Endothelial cell of umbilical vein (primary cell): ENCODE measurements at regions of chr5 and their contacts with region 1.

Region 1: DNA sequence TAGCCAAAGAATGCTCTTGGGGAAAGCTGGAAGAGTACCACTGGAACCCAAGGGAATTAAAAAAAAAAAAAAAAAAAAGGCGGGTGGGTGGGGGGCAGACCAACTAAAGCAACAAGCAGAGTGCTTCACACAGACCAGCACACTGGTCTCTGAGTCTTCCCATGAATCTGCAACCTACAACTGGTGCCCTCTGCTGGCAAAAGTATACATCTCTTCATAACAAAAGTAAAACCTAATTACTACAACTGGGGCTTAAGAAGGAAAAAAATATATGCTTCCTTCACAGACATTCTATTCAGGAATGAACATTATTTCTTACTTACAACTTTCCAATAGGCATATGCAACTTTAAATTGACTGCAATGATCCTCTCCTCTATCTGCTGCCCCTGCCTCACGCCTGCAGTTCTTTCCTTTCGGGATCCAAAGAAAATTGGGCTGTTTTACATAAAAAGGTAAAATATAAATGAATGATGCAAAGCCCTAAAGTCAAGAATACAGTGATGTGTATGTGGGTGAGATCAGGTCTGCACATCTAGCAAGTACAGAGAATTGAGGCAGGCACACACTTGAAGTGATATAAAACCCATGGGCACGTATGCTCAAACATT is 7.2 kb upstream of the KLHL3 start:
- DNase-seq: peak; percentile 72
- H3K4me3 ChIP-seq: no peak overlapping the region
- H3K27ac ChIP-seq: no peak overlapping the region
- H3K4me1 ChIP-seq: no peaks in the 10 kb centered on the region
- H3K27me3 ChIP-seq: no peaks in the 10 kb centered on the region
- CTCF ChIP-seq: peak; percentile 65 to 67
- POLR2A ChIP-seq: no peak

Region 2: GRCh38 chr5:137254119-137255090 is 488.7 kb before region 1 on chr5:
- CTCF ChIA-PET with region 1: no interaction called
- POLR2A ChIA-PET with region 1: no interaction called
- dilution Hi-C with region 1: no loop called
- intact Hi-C with region 1: no loop called
- DNase-seq: no peak
- H3K4me3 ChIP-seq: no peak overlapping the region
- H3K27ac ChIP-seq: no peak overlapping the region
- H3K4me1 ChIP-seq: no peaks in the 10 kb centered on the region
- H3K27me3 ChIP-seq: no peaks in the 10 kb centered on the region
- CTCF ChIP-seq: no peak
- POLR2A ChIP-seq: no peak

Region 3: DNA sequence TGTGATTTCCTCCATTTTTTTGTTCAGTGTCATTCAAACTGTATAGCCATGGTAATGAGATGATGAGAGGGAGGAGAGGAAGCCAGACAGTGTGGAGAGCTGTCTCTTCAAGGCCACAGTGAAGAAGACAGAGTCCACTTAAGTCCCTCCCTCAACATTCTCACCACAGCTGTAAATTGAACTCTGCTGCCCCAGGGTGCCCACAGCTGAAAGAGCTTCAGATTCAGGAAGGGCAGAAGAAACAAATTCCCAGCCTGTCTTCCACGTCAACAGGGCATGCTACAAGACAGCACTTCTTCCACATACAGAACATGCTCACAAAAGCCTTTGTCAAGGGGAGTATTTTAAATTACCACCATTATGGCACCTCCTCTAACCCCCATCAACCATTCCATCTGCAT is 107.6 kb before region 1 on chr5:
- CTCF ChIA-PET with region 1: interaction called, 375 read pairs
- POLR2A ChIA-PET with region 1: no interaction called
- dilution Hi-C with region 1: no loop called
- intact Hi-C with region 1: no loop called
- DNase-seq: peak; percentile 51
- H3K4me3 ChIP-seq: no peak overlapping the region
- H3K27ac ChIP-seq: no peak overlapping the region
- H3K4me1 ChIP-seq: no peaks in the 10 kb centered on the region
- H3K27me3 ChIP-seq: no peaks in the 10 kb centered on the region
- CTCF ChIP-seq: no peak
- POLR2A ChIP-seq: no peak

Region 4: DNA sequence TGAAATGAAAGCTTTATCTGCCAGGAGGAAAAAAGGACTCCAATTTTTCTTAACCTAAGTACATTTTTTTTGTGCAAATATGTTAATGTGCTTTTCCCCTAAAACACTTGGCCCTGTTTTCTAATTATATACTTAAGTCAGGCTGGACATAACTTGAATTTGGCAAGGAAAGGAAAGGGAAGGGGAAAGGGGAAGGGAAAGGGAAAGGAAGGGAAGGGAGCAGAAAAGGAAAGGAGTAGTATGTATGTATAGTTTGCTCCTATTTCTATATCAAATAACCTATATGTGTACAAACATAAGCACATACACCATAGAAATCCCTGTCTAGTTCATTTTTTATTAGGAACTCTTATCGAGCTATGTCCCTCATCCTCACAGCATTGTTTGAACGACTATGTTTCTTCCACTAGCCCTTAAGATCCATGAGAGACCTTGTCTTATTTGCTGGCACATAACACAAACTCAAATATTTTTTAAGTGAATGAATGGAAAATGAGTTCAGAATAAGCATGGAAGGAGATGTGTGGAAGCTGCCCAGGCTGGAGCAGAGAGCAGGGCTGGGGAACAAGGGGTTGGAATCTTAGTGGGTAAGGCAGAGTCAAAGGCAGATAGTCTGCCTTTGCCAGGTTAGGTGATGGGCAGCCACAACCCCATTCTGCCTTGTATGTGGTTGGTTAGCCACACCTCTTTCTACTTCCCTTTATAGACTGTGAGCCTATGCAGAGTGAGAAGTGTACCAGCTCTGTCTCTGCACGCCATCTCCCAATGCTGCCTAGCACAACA is 77.3 kb before region 1 on chr5:
- CTCF ChIA-PET with region 1: interaction called, 721 read pairs
- POLR2A ChIA-PET with region 1: no interaction called
- dilution Hi-C with region 1: no loop called
- intact Hi-C with region 1: no loop called
- DNase-seq: peak; percentile 15
- H3K4me3 ChIP-seq: no peak overlapping the region
- H3K27ac ChIP-seq: no peak overlapping the region
- H3K4me1 ChIP-seq: no peaks in the 10 kb centered on the region
- H3K27me3 ChIP-seq: no peaks in the 10 kb centered on the region
- CTCF ChIP-seq: no peak
- POLR2A ChIP-seq: no peak

Region 5: DNA sequence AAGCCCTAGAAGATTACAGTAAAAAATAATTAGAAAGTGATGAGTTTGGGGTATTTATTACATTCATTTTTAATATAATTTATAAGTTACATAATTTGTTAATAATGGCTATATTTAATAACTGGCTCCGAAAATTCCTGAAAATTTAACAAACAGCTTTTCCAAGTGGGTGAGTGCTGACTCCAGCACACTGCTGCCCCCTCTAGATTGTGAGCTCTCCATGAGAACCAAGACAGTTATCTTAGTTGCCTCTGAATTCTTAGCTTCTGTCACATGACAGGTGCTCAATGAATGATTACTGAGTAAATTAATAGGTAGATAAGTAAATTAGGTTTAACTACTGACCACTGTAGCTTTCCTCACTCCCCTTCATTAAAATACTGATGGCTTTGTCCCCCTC is 15.1 kb before region 1 on chr5:
- CTCF ChIA-PET with region 1: interaction called, 35 read pairs
- POLR2A ChIA-PET with region 1: no interaction called
- dilution Hi-C with region 1: no loop called
- intact Hi-C with region 1: no loop called
- DNase-seq: peak; percentile 43
- H3K4me3 ChIP-seq: no peak overlapping the region
- H3K27ac ChIP-seq: no peak overlapping the region
- H3K4me1 ChIP-seq: no peaks in the 10 kb centered on the region
- H3K27me3 ChIP-seq: no peaks in the 10 kb centered on the region
- CTCF ChIP-seq: peak in 1 of 2 donors; percentile 21
- POLR2A ChIP-seq: no peak

Region 6: DNA sequence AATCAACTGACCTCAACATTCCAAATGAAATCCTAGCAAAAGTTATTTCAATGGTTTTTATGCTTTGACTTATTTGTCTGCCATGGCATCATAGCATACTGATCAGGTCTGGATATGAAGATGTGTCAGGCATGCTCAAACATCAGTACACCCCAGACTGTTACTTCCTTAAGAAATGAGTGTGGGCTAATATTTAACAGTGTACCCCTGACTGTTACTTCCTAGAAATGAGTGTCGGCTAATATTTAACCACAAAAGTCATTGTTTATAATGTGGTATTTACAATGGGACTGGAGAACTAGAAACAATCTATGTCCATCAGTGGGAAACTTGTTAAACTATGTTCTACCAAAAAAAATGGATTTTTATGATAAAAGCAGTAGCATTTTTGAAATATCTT is 49.2 kb after region 1 on chr5:
- CTCF ChIA-PET with region 1: no interaction called
- POLR2A ChIA-PET with region 1: no interaction called
- dilution Hi-C with region 1: no loop called
- intact Hi-C with region 1: no loop called
- DNase-seq: no peak
- H3K4me3 ChIP-seq: no peak overlapping the region
- H3K27ac ChIP-seq: no peak overlapping the region
- H3K4me1 ChIP-seq: no peaks in the 10 kb centered on the region
- H3K27me3 ChIP-seq: peaks cover 4 to 5% of the 10 kb centered on the region in 2 experiments
- CTCF ChIP-seq: no peak
- POLR2A ChIP-seq: no peak

Region 7: GRCh38 chr5:137888857-137889759 is 146.0 kb after region 1 on chr5 and contains the start of gene PKD2L2:
- CTCF ChIA-PET with region 1: no interaction called
- POLR2A ChIA-PET with region 1: no interaction called
- dilution Hi-C with region 1: no loop called
- intact Hi-C with region 1: no loop called
- DNase-seq: peak; percentile 82
- H3K4me3 ChIP-seq: peak within 1 kb of the TSS in 2 of 3 experiments; percentile 25 to 53
- H3K27ac ChIP-seq: peak within 1 kb of the TSS; percentile 9
- H3K4me1 ChIP-seq: peaks cover 13% of the 10 kb centered on the region
- H3K27me3 ChIP-seq: no peaks in the 10 kb centered on the region
- CTCF ChIP-seq: peak in 1 of 2 donors; percentile 13
- POLR2A ChIP-seq: no peak
- total RNA-seq, gene PKD2L2: not detected in 2 replicates